Panc1 (cell line): ENCODE measurements at regions of chr10 and their contacts with region 1.

Region 1: GRCh38 chr10:115059301-115059898 is 33.8 kb upstream of the ATRNL1 start:
- DNase-seq: no peak
- ATAC-seq: no peak
- H3K4me3 ChIP-seq: no peak overlapping the region
- H3K27ac ChIP-seq: no peak overlapping the region
- H3K4me1 ChIP-seq: no peaks in the 10 kb centered on the region
- H3K27me3 ChIP-seq: peaks cover 18% of the 10 kb centered on the region
- CTCF ChIP-seq: no peak

Region 2: GRCh38 chr10:115094416-115095140 is 35.2 kb after region 1 on chr10:
- CTCF ChIA-PET with region 1: no interaction called
- POLR2A ChIA-PET with region 1: interaction called, 19 read pairs
- in situ Hi-C with region 1: no loop called
- intact Hi-C with region 1: no loop called
- DNase-seq: no peak
- ATAC-seq: no peak
- H3K4me3 ChIP-seq: peak overlapping the region; percentile 65 to 72
- H3K27ac ChIP-seq: peak overlapping the region; percentile 74
- H3K4me1 ChIP-seq: peaks cover 10% of the 10 kb centered on the region; the same call in 1 of the 2 replicates
- H3K27me3 ChIP-seq: peaks cover 26% of the 10 kb centered on the region
- CTCF ChIP-seq: no peak